HCT116 (cell line): ENCODE measurements at regions of chr5 and their contacts with region 1.

Region 1: GRCh38 chr5:171418316-171418981 is 998 bp upstream of the FGF18 start:
- DNase-seq: peak; percentile 61
- ATAC-seq: peak; percentile 76
- H3K4me3 ChIP-seq: peak overlapping the region; percentile 42 to 58
- H3K27ac ChIP-seq: peak overlapping the region; percentile 50
- H3K4me1 ChIP-seq: peaks cover 0 to 45% of the 10 kb centered on the region in 2 experiments; a peak in 3 of 4 replicates
- H3K27me3 ChIP-seq: no peaks in the 10 kb centered on the region
- CTCF ChIP-seq: peak; percentile 86 to 90 (median 90)
- POLR2A ChIP-seq: no peak
- RAD21 ChIP-seq: peak; percentile 91

Region 2: GRCh38 chr5:171387345-171387969 is 31.0 kb before region 1 on chr5 and contains the start of gene NPM1:
- CTCF ChIA-PET with region 1: no interaction called
- POLR2A ChIA-PET with region 1: interaction called, 12 read pairs
- RAD21 ChIA-PET with region 1: no interaction called
- intact Hi-C with region 1: no loop called
- DNase-seq: peak; percentile 98
- ATAC-seq: peak; percentile 85
- H3K4me3 ChIP-seq: peak within 1 kb of the TSS; percentile 75 to 80
- H3K27ac ChIP-seq: peak within 1 kb of the TSS; percentile 90
- H3K4me1 ChIP-seq: peaks cover 17 to 48% of the 10 kb centered on the region in 2 experiments
- H3K27me3 ChIP-seq: no peaks in the 10 kb centered on the region
- CTCF ChIP-seq: no peak
- POLR2A ChIP-seq: peak; percentile 98
- RAD21 ChIP-seq: no peak
- total RNA-seq, gene NPM1: 2,693 TPM

Region 3: DNA sequence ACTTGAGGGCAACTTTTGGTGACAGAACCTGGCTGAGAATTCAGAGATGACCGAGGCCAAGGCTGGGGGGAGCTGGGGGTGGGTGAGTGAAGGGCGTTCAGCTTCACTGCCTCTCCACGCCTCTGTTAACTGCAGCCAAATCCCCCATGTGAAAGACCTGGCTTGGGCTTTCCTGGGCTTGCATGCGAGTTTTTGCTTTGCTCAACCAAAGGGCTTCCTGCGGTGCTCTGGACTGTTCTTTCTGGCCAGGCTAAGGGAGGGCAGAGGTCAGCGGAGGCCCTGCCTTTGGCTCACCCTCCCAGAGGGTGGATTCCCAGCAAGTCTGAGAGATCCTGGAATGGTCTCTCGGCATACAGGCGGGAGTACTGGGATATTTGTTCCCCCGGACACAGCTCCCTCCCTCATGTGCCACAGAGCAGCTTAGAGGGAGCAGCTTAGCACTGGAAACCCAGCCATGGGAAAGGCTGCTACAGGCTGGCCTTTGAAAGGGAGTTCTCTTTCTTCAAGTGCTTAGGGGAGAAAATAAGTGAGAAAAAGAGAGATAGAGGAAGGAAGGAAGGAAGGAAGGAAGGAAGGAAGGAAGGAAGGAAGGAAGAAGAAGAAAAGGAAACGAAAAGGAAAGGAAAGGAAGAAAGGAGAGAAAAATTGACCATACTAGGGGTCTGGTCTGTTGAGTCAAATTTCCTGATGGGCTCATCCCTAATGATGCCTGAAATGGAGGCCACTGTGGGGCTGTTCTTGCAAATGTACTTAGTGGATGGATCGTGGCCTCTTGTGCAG is 159.8 kb after region 1 on chr5:
- CTCF ChIA-PET with region 1: no interaction called
- POLR2A ChIA-PET with region 1: no interaction called
- RAD21 ChIA-PET with region 1: no interaction called
- intact Hi-C with region 1: no loop called
- DNase-seq: no peak
- ATAC-seq: no peak
- H3K4me3 ChIP-seq: no peak overlapping the region
- H3K27ac ChIP-seq: no peak overlapping the region
- H3K4me1 ChIP-seq: no peaks in the 10 kb centered on the region
- H3K27me3 ChIP-seq: no peaks in the 10 kb centered on the region
- CTCF ChIP-seq: no peak
- POLR2A ChIP-seq: no peak
- RAD21 ChIP-seq: no peak

Region 4: GRCh38 chr5:171606414-171607024 is 188.1 kb after region 1 on chr5:
- CTCF ChIA-PET with region 1: interaction called, 32 read pairs
- POLR2A ChIA-PET with region 1: no interaction called
- RAD21 ChIA-PET with region 1: interaction called in 1 of 2 experiments, 8 read pairs
- intact Hi-C with region 1: loop called (anchors 1 kb)
- DNase-seq: peak; percentile 67
- ATAC-seq: peak; percentile 90
- H3K4me3 ChIP-seq: no peak overlapping the region
- H3K27ac ChIP-seq: no peak overlapping the region
- H3K4me1 ChIP-seq: no peaks in the 10 kb centered on the region
- H3K27me3 ChIP-seq: no peaks in the 10 kb centered on the region
- CTCF ChIP-seq: peak; percentile 80 to 86 (median 84)
- POLR2A ChIP-seq: no peak
- RAD21 ChIP-seq: peak; percentile 82

Region 5: GRCh38 chr5:171630027-171630669 is 211.7 kb after region 1 on chr5:
- CTCF ChIA-PET with region 1: interaction called, 4 read pairs
- POLR2A ChIA-PET with region 1: no interaction called
- RAD21 ChIA-PET with region 1: no interaction called
- intact Hi-C with region 1: loop called (anchors 2 kb)
- DNase-seq: peak; percentile 41
- ATAC-seq: peak; percentile 100
- H3K4me3 ChIP-seq: peak overlapping the region; percentile 17 to 51
- H3K27ac ChIP-seq: no peak overlapping the region
- H3K4me1 ChIP-seq: peaks cover 0 to 14% of the 10 kb centered on the region in 2 experiments; a peak in 2 of 4 replicates
- H3K27me3 ChIP-seq: peaks cover 14% of the 10 kb centered on the region
- CTCF ChIP-seq: peak; percentile 49 to 71 (median 53)
- POLR2A ChIP-seq: no peak
- RAD21 ChIP-seq: peak; percentile 85

Region 6: GRCh38 chr5:171850324-171851285 is 432.2 kb after region 1 on chr5:
- CTCF ChIA-PET with region 1: no interaction called
- POLR2A ChIA-PET with region 1: no interaction called
- RAD21 ChIA-PET with region 1: no interaction called
- intact Hi-C with region 1: loop called (anchors 2 kb)
- DNase-seq: peak; percentile 31
- ATAC-seq: peak; percentile 91
- H3K4me3 ChIP-seq: no peak overlapping the region
- H3K27ac ChIP-seq: no peak overlapping the region
- H3K4me1 ChIP-seq: no peaks in the 10 kb centered on the region
- H3K27me3 ChIP-seq: no peaks in the 10 kb centered on the region
- CTCF ChIP-seq: peak; percentile 62 to 80 (median 66)
- POLR2A ChIP-seq: no peak
- RAD21 ChIP-seq: peak; percentile 76